PC-3 (cell line): ENCODE measurements at regions of chr1 and their contacts with region 1.

Region 1: DNA sequence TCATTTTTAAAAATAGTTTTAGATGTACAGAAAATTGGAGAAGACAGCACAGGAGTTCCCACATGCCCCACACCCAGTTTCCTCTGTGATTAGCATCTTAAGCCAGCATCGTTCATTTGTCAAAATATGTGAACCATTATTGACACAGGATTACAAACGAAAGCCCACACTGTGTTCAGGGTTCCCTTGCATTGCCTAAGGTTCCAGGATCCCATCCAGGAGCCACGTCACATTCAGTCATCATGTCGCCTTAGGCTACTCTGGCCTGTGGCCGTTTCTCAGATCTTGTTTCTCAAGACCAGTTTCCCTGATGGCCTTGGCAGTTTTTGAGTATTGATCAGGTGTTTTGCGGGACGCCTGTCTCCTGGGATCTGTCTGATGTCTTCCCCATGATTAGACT is 34.7 kb upstream of the TNFRSF1B start:
- DNase-seq: peak; percentile 99
- ATAC-seq: peak; percentile 82
- H3K4me3 ChIP-seq: no peak overlapping the region
- H3K27ac ChIP-seq: peak overlapping the region; percentile 99
- H3K4me1 ChIP-seq: peaks cover 21% of the 10 kb centered on the region
- H3K27me3 ChIP-seq: no peaks in the 10 kb centered on the region
- CTCF ChIP-seq: no peak

Region 2: GRCh38 chr1:12153181-12153785 is 21.2 kb after region 1 on chr1:
- CTCF ChIA-PET with region 1: no interaction called
- POLR2A ChIA-PET with region 1: interaction called, 11 read pairs
- intact Hi-C with region 1: no loop called
- DNase-seq: peak; percentile 34
- ATAC-seq: peak; percentile 82
- H3K4me3 ChIP-seq: no peak overlapping the region
- H3K27ac ChIP-seq: peak overlapping the region; percentile 20; the same call in 1 of the 2 replicates
- H3K4me1 ChIP-seq: peaks cover 30% of the 10 kb centered on the region
- H3K27me3 ChIP-seq: no peaks in the 10 kb centered on the region
- CTCF ChIP-seq: no peak

Region 3: DNA sequence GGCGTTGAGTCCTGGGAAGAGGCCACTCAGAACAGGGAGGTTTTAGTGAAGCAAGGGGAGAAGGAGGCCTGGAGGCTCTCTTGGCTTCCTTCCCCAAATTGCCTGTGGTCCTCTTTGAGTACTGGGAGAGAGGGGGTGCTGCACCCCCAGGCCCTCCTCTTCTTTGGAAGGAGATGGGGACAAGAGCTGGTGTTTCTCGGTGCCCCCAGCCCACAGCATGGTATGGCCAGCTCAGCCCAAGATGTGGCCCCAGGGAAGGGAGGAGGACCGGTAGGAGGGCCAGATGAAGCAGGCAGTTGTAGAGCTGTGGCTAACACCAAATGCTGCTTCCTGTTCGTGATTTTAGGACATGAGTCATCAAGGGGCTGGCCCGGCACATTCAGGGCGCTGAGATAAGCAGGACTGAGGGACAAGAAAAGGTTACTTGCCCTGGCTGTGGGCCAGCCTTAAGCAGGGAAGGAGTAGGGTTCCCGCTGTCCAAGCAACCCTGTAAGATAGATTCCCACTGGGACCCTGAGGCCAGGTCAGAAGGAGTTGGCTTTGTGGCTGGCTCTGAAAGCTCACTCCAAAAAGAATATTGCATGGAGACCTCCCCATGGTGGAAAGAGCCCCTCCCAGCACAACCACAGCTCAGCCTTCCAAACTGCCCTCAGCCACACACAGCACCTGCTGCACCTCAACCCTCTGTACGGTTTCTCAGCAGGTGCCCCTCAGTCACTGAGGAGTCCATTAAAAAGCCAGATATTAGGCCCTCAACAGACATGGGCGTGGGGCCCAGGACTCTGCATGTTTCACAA is 29.8 kb after region 1 on chr1:
- CTCF ChIA-PET with region 1: interaction called, 5 read pairs
- POLR2A ChIA-PET with region 1: no interaction called
- intact Hi-C with region 1: loop called (anchors 1 kb)
- DNase-seq: peak; percentile 87
- ATAC-seq: peak; percentile 91
- H3K4me3 ChIP-seq: no peak overlapping the region
- H3K27ac ChIP-seq: peak overlapping the region; percentile 64
- H3K4me1 ChIP-seq: peaks cover 43% of the 10 kb centered on the region
- H3K27me3 ChIP-seq: no peaks in the 10 kb centered on the region
- CTCF ChIP-seq: no peak